ENCODE measurements at regions of chr12 and their contacts with region 1.

Region 1: DNA sequence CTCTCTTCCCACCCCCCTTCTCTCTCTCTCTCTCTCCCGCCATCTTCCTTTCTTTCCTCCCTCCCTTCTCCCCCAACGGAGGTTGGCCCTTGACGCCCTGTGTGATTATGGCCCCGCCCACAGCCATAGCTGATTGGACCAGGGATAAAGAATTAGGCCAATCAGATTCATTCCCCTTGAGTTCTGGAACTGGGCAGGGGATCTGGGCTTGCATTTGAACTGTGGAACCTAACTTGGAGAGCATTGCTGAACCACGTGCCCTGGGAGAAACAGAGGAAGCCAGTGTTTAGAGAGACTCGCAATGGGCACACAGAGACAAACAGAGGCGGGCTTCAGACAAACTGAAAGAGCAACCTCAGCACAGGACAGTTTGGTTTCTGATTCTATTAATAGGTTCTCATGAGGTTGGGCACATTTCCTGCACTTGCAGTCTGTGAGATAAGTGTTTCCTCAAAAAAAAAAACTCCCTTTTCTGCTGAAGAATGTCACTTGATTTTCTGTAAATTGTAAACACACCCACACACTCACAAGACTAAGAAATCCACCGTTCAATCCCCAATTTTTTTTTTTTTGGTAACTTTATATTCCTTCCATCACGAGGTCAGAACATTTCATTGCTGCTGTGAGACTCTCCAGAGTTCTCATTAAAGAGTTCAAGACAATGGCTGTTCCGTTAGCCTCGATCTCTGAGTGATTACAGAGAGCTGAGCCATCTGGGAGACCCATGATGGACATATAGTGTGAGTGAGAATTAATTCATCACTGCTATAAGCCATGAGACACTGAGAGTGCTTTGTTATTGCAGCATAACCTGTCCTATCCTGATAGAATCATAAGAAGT is 3.5 kb upstream of the P2RX7 start:
- DNase-seq: peak; percentile 77 to 88
- ATAC-seq: peak; percentile 74 to 85 (median 81)
- H3K4me3 ChIP-seq: peak overlapping the region in 6 of 10 donors; percentile 11 to 29 (median 22)
- H3K27ac ChIP-seq: peak overlapping the region in 9 of 10 donors; percentile 50 to 85 (median 61)
- H3K4me1 ChIP-seq: peaks cover 2 to 52% (median 40%) of the 10 kb centered on the region in 9 donors
- H3K27me3 ChIP-seq: no peaks in the 10 kb centered on the region
- CTCF ChIP-seq: no peak

Region 2: GRCh38 chr12:121190523-121191031 is 61.4 kb after region 1 on chr12:
- intact Hi-C with region 1: loop called in 1 of 10 experiments (anchors 10 kb)
- DNase-seq: no peak
- ATAC-seq: peak in 6 of 8 donors; percentile 37 to 80 (median 46)
- H3K4me3 ChIP-seq: no peak overlapping the region
- H3K27ac ChIP-seq: peak overlapping the region in 4 of 10 donors; percentile 37 to 75 (median 46)
- H3K4me1 ChIP-seq: peaks cover 0 to 28% (median 0%) of the 10 kb centered on the region in 9 donors
- H3K27me3 ChIP-seq: no peaks in the 10 kb centered on the region
- CTCF ChIP-seq: no peak

Region 3: DNA sequence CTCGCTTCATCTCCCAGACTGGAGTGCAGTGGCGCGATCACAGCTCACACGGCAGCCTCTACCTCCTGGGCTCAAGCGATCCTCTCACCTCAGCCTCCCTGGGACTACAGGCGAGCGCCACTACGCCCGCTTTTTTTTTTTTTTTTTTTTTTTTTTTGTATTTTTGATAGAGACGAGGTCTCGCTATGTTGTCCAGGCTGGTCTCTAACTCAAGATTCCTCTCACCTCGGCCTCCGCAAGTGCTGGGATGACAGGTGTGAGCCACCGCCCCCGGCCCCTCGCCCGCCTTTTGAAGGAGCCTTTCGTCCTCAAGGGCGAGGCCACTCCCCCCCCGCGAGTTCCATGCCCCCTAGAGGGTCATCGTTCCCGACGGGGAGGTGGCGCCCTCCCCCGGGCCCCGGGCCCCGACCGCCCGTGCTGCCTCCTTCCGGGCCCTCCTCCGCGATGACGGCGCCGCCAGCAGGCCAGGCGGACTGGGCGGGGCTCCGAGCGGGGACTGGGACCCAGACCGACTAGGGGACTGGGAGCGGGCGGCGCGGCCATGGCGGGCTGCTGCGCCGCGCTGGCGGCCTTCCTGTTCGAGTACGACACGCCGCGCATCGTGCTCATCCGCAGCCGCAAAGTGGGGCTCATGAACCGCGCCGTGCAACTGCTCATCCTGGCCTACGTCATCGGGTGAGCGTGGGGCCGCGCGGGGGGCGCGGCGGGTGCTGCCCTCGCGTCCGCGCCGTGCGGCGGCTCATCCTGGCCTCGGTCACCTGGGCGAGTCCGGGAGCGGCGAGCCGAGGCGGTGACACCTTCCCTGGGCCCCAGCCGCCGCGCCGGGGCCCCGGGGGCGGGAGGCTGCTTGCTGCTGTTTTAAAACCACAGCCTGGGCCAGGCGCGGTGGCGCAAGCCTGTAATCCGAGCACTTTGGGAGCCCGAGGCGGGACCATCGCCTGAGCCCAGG is 80.7 kb after region 1 on chr12 and contains the start of gene P2RX4:
- intact Hi-C with region 1: loop called in 4 of 10 experiments (anchors 5 to 10 kb)
- DNase-seq: peak; percentile 77 to 89
- ATAC-seq: peak; percentile 83 to 93 (median 90)
- H3K4me3 ChIP-seq: peak within 1 kb of the TSS; percentile 61 to 92 (median 76)
- H3K27ac ChIP-seq: peak within 1 kb of the TSS; percentile 11 to 94 (median 84)
- H3K4me1 ChIP-seq: peaks cover 0 to 48% (median 16%) of the 10 kb centered on the region in 9 donors
- H3K27me3 ChIP-seq: no peaks in the 10 kb centered on the region
- CTCF ChIP-seq: peak in 6 of 9 donors; percentile 20 to 51 (median 50)
- total RNA-seq, gene P2RX4: 3.7 to 12.6 (median 5.5) TPM

Measured in heart right ventricle (tissue), 16 donors.